MCF 10A (cell line): ENCODE measurements at regions of chr22 and their contacts with region 1.

Region 1: DNA sequence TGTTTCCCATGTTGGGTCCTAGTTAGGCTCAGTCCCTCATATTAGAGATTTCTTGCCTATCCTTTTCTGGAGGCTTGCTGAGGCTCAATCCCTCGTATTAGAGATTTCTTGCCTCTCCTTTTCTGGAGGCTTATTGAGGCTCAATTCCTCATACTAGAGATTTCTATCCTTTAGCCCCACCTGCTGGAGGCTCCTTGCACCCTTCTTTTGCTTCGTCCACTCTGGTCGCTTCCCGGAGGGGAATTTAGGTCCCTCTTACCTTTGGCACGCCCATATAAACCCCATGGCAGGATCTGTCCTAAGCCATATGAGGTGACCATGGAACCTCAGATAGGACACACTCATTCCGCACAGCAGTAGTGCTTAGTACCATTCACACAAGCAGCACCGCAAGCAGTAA is 15.9 kb downstream of the CYP2D6 start:
- DNase-seq: peak; percentile 46
- H3K4me3 Mint-ChIP-seq: no peak overlapping the region
- H3K27ac Mint-ChIP-seq: no peak overlapping the region
- H3K4me1 Mint-ChIP-seq: no peaks in the 10 kb centered on the region
- H3K27me3 Mint-ChIP-seq: no peaks in the 10 kb centered on the region
- CTCF ChIP-seq: peak; percentile 40

Region 2: GRCh38 chr22:41822317-41823060 is 292.2 kb before region 1 on chr22:
- CTCF ChIA-PET with region 1: no interaction called
- POLR2A ChIA-PET with region 1: no interaction called
- intact Hi-C with region 1: loop called (anchors 5 kb)
- DNase-seq: peak; percentile 71
- H3K4me3 Mint-ChIP-seq: no peak overlapping the region
- H3K27ac Mint-ChIP-seq: peak overlapping the region; percentile 1
- H3K4me1 Mint-ChIP-seq: no peaks in the 10 kb centered on the region
- H3K27me3 Mint-ChIP-seq: no peaks in the 10 kb centered on the region
- CTCF ChIP-seq: peak; percentile 51